Calu3 (cell line): ENCODE measurements at regions of chr7 and their contacts with region 1.

Region 1: GRCh38 chr7:29921404-29922010 is 68.1 kb downstream of the SCRN1 start:
- DNase-seq: peak; percentile 77
- H3K4me3 Mint-ChIP-seq: no peak overlapping the region
- H3K27ac Mint-ChIP-seq: no peak overlapping the region
- H3K4me1 Mint-ChIP-seq: no peaks in the 10 kb centered on the region
- H3K27me3 Mint-ChIP-seq: no peaks in the 10 kb centered on the region
- CTCF ChIP-seq: peak; percentile 96

Region 2: GRCh38 chr7:29639881-29640595 is 281.5 kb before region 1 on chr7:
- CTCF ChIA-PET with region 1: interaction called, 30 read pairs
- intact Hi-C with region 1: loop called (anchors 1 kb)
- DNase-seq: no peak
- H3K4me3 Mint-ChIP-seq: no peak overlapping the region
- H3K27ac Mint-ChIP-seq: no peak overlapping the region
- H3K4me1 Mint-ChIP-seq: peaks cover 25% of the 10 kb centered on the region
- H3K27me3 Mint-ChIP-seq: no peaks in the 10 kb centered on the region
- CTCF ChIP-seq: no peak

Region 3: GRCh38 chr7:29748286-29749108 is 173.0 kb before region 1 on chr7:
- CTCF ChIA-PET with region 1: interaction called, 26 read pairs
- intact Hi-C with region 1: loop called (anchors 1 kb)
- DNase-seq: peak; percentile 22
- H3K4me3 Mint-ChIP-seq: no peak overlapping the region
- H3K27ac Mint-ChIP-seq: no peak overlapping the region
- H3K4me1 Mint-ChIP-seq: peaks cover 14% of the 10 kb centered on the region
- H3K27me3 Mint-ChIP-seq: peaks cover 20% of the 10 kb centered on the region
- CTCF ChIP-seq: peak; percentile 19

Region 4: GRCh38 chr7:29764227-29764626 is 157.3 kb before region 1 on chr7:
- CTCF ChIA-PET with region 1: interaction called, 8 read pairs
- intact Hi-C with region 1: loop called (anchors 1 kb)
- DNase-seq: peak; percentile 44
- H3K4me3 Mint-ChIP-seq: no peak overlapping the region
- H3K27ac Mint-ChIP-seq: no peak overlapping the region
- H3K4me1 Mint-ChIP-seq: no peaks in the 10 kb centered on the region
- H3K27me3 Mint-ChIP-seq: peaks cover 32% of the 10 kb centered on the region
- CTCF ChIP-seq: peak; percentile 22

Region 5: GRCh38 chr7:29783671-29784070 is 137.8 kb before region 1 on chr7:
- CTCF ChIA-PET with region 1: no interaction called
- intact Hi-C with region 1: no loop called
- DNase-seq: no peak
- H3K4me3 Mint-ChIP-seq: no peak overlapping the region
- H3K27ac Mint-ChIP-seq: no peak overlapping the region
- H3K4me1 Mint-ChIP-seq: no peaks in the 10 kb centered on the region
- H3K27me3 Mint-ChIP-seq: peaks cover 50% of the 10 kb centered on the region
- CTCF ChIP-seq: no peak

Region 6: DNA sequence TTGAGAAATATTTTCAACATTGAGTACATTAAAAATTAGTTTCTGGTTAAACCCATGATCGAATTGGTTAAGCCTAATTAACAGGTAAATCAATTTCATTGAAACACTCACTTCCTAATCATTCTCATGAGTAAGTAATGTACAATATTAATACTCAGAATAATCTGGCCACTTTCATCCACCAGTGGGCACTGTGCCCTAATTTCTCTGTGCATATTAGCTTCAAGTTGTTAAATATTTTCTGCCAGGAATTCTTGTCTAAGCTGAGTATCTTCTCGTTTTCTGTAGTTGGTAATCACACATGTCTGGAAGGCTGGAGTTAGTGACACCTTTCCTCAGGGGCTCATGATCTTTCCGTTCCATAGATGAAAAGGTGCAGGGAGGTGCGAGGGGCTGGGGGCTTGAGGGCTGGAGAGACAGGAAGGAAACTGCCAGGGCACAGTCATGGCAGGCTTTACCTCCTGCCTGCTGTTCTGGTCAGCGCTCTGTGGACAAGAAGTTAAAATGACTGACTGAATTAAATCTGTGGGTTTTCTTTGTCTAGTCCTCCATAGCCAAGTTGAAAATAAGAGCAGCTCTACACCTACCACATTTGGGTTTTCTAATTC is 43.3 kb before region 1 on chr7:
- CTCF ChIA-PET with region 1: interaction called, 17 read pairs
- intact Hi-C with region 1: loop called (anchors 1 kb)
- DNase-seq: peak; percentile 61
- H3K4me3 Mint-ChIP-seq: no peak overlapping the region
- H3K27ac Mint-ChIP-seq: no peak overlapping the region
- H3K4me1 Mint-ChIP-seq: no peaks in the 10 kb centered on the region
- H3K27me3 Mint-ChIP-seq: no peaks in the 10 kb centered on the region
- CTCF ChIP-seq: peak; percentile 62

Region 7: GRCh38 chr7:29935111-29935510 is 13.6 kb after region 1 on chr7:
- CTCF ChIA-PET with region 1: interaction called, 12 read pairs
- intact Hi-C with region 1: no loop called
- DNase-seq: no peak
- H3K4me3 Mint-ChIP-seq: no peak overlapping the region
- H3K27ac Mint-ChIP-seq: no peak overlapping the region
- H3K4me1 Mint-ChIP-seq: peaks cover 17% of the 10 kb centered on the region
- H3K27me3 Mint-ChIP-seq: no peaks in the 10 kb centered on the region
- CTCF ChIP-seq: no peak

Region 8: GRCh38 chr7:30396389-30396788 is 474.9 kb after region 1 on chr7:
- CTCF ChIA-PET with region 1: no interaction called
- intact Hi-C with region 1: no loop called
- DNase-seq: no peak
- H3K4me3 Mint-ChIP-seq: no peak overlapping the region
- H3K27ac Mint-ChIP-seq: no peak overlapping the region
- H3K4me1 Mint-ChIP-seq: no peaks in the 10 kb centered on the region
- H3K27me3 Mint-ChIP-seq: no peaks in the 10 kb centered on the region
- CTCF ChIP-seq: no peak